CD4-positive, alpha-beta memory T cell (primary cell): ENCODE measurements at regions of chr11 and their contacts with region 1.

Region 1: GRCh38 chr11:125874556-125875124 is 12.8 kb upstream of the HYLS1 start:
- DNase-seq: peak in 4 of 5 donors; percentile 23 to 39 (median 29)
- H3K4me3 ChIP-seq: no peak overlapping the region
- H3K4me3 Mint-ChIP-seq: no peak overlapping the region
- H3K27ac ChIP-seq: no peak overlapping the region
- H3K27ac Mint-ChIP-seq: no peak overlapping the region
- H3K4me1 ChIP-seq: no peaks in the 10 kb centered on the region
- H3K4me1 Mint-ChIP-seq: peaks cover 0 to 3% (median 1%) of the 10 kb centered on the region in 4 donors
- H3K27me3 ChIP-seq: no peaks in the 10 kb centered on the region
- H3K27me3 Mint-ChIP-seq: peaks cover 2 to 3% of the 10 kb centered on the region in 2 donors

Region 2: DNA sequence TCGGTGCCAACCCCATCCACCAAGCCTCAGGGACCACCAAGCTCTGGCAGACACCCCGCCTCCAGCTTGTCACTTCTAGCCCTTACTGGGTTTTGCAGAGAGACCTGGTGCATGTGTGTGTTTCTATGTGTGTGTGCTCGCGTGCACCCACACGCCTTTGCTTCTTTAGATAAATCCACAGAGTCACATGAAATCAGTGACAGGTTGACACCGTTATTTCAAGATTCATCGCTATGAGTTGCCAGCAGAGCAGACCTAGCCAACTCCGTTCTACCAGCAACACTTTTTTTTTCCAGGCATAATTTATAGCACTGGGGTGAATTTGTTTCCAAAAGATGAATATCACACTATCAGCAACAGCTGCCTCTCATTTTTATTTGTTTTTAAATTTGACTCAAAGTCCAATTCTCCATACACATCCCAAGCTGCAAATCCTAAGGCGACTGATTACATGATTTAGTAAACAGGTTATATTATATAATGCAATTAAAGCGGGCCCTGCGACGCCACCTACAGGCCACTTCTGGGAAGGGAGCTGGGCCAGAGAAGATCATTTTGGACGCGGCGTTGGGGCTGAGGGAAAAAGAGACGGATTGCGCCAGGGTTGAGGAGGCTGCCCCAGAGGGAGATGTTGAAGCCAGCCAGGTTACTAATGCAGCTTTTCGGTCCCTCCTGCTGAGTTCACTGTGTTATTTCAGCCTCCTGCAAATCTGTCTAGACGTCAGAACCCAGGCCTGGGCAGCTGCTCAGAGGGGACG is 529.0 kb before region 1 on chr11:
- CTCF ChIA-PET with region 1: no interaction called
- POLR2A ChIA-PET with region 1: no interaction called
- intact Hi-C with region 1: loop called (anchors 5 kb)
- DNase-seq: peak in 4 of 5 donors; percentile 12 to 17 (median 15)
- H3K4me3 ChIP-seq: no peak overlapping the region
- H3K4me3 Mint-ChIP-seq: peak overlapping the region in 1 of 8 donors; percentile 57
- H3K27ac ChIP-seq: no peak overlapping the region
- H3K27ac Mint-ChIP-seq: peak overlapping the region in 2 of 7 donors; percentile 13 to 48
- H3K4me1 ChIP-seq: no peaks in the 10 kb centered on the region
- H3K4me1 Mint-ChIP-seq: peaks cover 0 to 5% (median 1%) of the 10 kb centered on the region in 4 donors
- H3K27me3 ChIP-seq: no peaks in the 10 kb centered on the region
- H3K27me3 Mint-ChIP-seq: peaks cover 3 to 17% of the 10 kb centered on the region in 2 donors

Region 3: GRCh38 chr11:125625630-125626287 is 248.9 kb before region 1 on chr11:
- CTCF ChIA-PET with region 1: interaction called, 3 read pairs
- POLR2A ChIA-PET with region 1: no interaction called
- intact Hi-C with region 1: loop called (anchors 5 kb)
- DNase-seq: peak; percentile 81 to 88 (median 85)
- H3K4me3 ChIP-seq: peak overlapping the region; percentile 84 to 98
- H3K4me3 Mint-ChIP-seq: peak overlapping the region; percentile 93 to 100 (median 98)
- H3K27ac ChIP-seq: peak overlapping the region; percentile 95
- H3K27ac Mint-ChIP-seq: peak overlapping the region; percentile 87 to 99 (median 99)
- H3K4me1 ChIP-seq: peaks cover 19% of the 10 kb centered on the region
- H3K4me1 Mint-ChIP-seq: peaks cover 11 to 29% (median 16%) of the 10 kb centered on the region in 4 donors
- H3K27me3 ChIP-seq: no peaks in the 10 kb centered on the region
- H3K27me3 Mint-ChIP-seq: no peaks in the 10 kb centered on the region

Region 4: DNA sequence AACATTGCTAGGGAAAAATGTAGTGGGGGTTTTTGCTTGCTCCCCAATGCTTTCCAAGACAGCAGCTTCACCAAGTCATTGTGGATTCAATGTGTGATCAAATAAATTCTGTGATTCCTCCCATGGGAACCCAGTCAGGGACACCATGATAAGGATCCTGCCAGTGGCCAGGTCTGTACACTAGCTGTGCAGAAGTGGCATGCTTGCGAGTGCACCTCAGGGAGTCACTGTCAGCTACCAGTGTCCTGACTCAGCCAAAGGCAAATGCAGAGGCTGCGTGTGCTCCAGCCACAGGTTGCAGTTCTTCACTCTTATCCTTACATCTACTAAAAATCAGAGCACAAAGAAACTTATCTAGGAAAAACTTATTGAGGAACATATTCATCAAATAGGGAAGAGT is 184.6 kb before region 1 on chr11:
- CTCF ChIA-PET with region 1: no interaction called
- POLR2A ChIA-PET with region 1: no interaction called
- intact Hi-C with region 1: no loop called
- DNase-seq: no peak
- H3K4me3 ChIP-seq: no peak overlapping the region
- H3K4me3 Mint-ChIP-seq: no peak overlapping the region
- H3K27ac ChIP-seq: no peak overlapping the region
- H3K27ac Mint-ChIP-seq: no peak overlapping the region
- H3K4me1 ChIP-seq: no peaks in the 10 kb centered on the region
- H3K4me1 Mint-ChIP-seq: no peaks in the 10 kb centered on the region
- H3K27me3 ChIP-seq: no peaks in the 10 kb centered on the region
- H3K27me3 Mint-ChIP-seq: peaks cover 0 to 3% of the 10 kb centered on the region in 2 donors